ENCODE measurements at regions of chr3 and their contacts with region 1.

Region 1: GRCh38 chr3:123642182-123642956 is 57.5 kb upstream of the HACD2 start:
- DNase-seq: peak; percentile 95
- ATAC-seq: peak; percentile 99
- H3K4me3 ChIP-seq: no peak overlapping the region
- H3K27ac ChIP-seq: peak overlapping the region; percentile 16
- H3K4me1 ChIP-seq: peaks cover 19% of the 10 kb centered on the region
- H3K27me3 ChIP-seq: no peaks in the 10 kb centered on the region
- CTCF ChIP-seq: peak; percentile 89
- EP300 ChIP-seq: no peak
- POLR2A ChIP-seq: no peak
- RAD21 ChIP-seq: peak; percentile 87

Region 2: DNA sequence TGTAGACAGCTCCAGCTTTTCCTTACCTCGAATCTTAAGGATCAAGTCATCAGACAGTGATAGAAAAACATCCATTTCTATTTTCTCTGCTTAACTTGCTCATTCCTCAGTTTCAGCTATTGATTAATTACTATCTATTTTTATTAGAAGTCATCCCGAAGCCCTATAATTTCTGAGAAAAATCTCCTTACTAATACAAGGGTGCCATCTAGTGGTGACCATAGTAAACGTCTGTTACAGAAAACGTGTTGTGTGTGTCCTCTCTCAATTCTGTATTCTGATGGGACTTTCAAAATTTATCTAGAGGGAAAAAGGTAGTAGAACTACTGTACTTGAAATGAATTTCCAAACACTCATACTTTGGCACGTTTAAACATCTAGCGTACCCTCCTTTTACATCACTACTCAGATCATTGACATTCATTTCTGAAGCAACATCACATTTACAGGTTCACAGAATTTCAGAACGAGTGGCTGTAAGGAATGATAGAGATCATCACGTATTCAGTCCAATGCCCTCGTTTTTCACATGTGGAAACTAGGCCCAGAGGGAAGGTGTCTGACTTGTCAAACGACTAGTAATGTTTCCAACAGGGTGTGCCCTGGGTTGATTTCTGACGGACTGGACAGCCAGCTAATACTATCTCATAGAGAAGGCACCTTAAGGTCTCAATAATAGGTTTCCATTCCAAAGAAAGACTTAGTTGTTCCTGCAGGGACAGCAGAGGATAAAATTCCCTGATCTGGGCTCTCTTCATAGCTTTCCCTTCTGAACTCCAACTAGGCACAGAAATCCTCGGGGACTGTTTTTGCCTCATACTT is 83.1 kb before region 1 on chr3:
- CTCF ChIA-PET with region 1: no interaction called
- POLR2A ChIA-PET with region 1: no interaction called
- in situ Hi-C with region 1: no loop called
- intact Hi-C with region 1: no loop called
- DNase-seq: peak; percentile 39
- ATAC-seq: no peak
- H3K4me3 ChIP-seq: no peak overlapping the region
- H3K27ac ChIP-seq: no peak overlapping the region
- H3K4me1 ChIP-seq: 0 out of 2 replicates have a peak, but pooled peaks cover 6% of the 10 kb centered on the region
- H3K27me3 ChIP-seq: no peaks in the 10 kb centered on the region
- CTCF ChIP-seq: peak; percentile 67
- EP300 ChIP-seq: no peak
- POLR2A ChIP-seq: no peak
- RAD21 ChIP-seq: peak; percentile 23; the same call in 1 of the 2 replicates

Region 3: GRCh38 chr3:123584988-123585937 is 57.1 kb before region 1 on chr3 and contains the start of gene HACD2:
- CTCF ChIA-PET with region 1: interaction called, 12 read pairs
- POLR2A ChIA-PET with region 1: interaction called, 8 read pairs
- in situ Hi-C with region 1: no loop called
- intact Hi-C with region 1: loop called (anchors 1 kb)
- DNase-seq: peak; percentile 94
- ATAC-seq: peak; percentile 95
- H3K4me3 ChIP-seq: peak within 1 kb of the TSS; percentile 89 to 98 (median 91)
- H3K27ac ChIP-seq: peak within 1 kb of the TSS; percentile 97
- H3K4me1 ChIP-seq: peaks cover 45% of the 10 kb centered on the region
- H3K27me3 ChIP-seq: no peaks in the 10 kb centered on the region; a peak in 1 of 5 replicates
- CTCF ChIP-seq: no peak
- EP300 ChIP-seq: no peak
- POLR2A ChIP-seq: peak; percentile 65 to 90
- RAD21 ChIP-seq: peak; percentile 33; the same call in 1 of the 2 replicates
- total RNA-seq, gene HACD2: 36.0 and 47.0 TPM in 2 replicates

Region 4: GRCh38 chr3:123723522-123724168 is 81.3 kb after region 1 on chr3:
- CTCF ChIA-PET with region 1: interaction called, 11 read pairs
- POLR2A ChIA-PET with region 1: no interaction called
- in situ Hi-C with region 1: no loop called
- intact Hi-C with region 1: no loop called
- DNase-seq: peak; percentile 62
- ATAC-seq: peak; percentile 63
- H3K4me3 ChIP-seq: no peak overlapping the region
- H3K27ac ChIP-seq: no peak overlapping the region
- H3K4me1 ChIP-seq: no peaks in the 10 kb centered on the region
- H3K27me3 ChIP-seq: no peaks in the 10 kb centered on the region
- CTCF ChIP-seq: peak; percentile 80
- EP300 ChIP-seq: no peak
- POLR2A ChIP-seq: no peak
- RAD21 ChIP-seq: peak; percentile 65